CD8-positive, alpha-beta T cell (primary cell): ENCODE measurements at regions of chr20 and their contacts with region 1.

Region 1: DNA sequence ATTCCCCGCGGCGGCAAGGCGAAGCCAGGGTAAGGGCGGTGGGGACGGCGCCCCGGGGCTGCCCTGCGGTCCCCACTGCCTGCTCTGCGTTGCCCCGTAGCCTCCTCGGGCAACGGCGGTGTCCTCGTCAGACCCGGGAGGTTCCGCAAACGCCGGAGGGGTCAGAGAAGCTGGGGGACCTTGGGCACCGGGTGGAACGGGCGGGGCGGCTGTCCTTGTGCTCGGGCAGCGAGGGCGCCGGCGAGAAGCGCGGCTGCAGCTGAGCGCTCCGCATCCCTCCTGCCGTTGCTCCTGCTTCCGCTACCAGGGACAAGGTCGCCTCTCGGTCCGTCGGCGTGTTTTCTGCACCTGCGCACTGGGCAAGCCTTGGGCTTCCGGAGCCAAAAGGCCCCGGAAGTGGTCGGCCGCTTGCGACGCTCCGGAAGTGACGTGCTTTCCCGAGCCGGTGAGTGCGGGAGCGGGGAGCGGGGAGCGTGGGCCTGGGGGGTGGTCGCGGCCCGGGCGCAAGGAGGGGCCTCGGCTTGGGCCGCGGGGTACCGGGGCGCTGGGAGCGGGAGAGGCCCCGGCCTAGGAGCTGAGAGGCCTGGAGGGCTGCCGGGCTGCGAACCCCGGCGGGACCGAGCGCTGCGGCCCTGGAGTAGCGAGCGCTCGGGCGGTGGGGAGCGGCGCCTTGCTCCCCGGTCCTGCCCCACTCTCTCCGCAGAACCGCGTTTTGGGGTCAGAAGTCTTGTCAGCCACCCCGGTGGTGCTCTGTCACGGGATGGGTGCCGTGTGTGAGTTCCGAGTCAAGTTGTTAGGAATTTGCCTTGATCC is at the start of gene MTG2:
- DNase-seq: peak; percentile 85 to 98 (median 95)
- ATAC-seq: peak; percentile 92
- H3K4me3 ChIP-seq: peak within 1 kb of the TSS; percentile 82 to 89
- H3K4me3 Mint-ChIP-seq: peak within 1 kb of the TSS; percentile 95
- H3K27ac ChIP-seq: peak within 1 kb of the TSS; percentile 89 to 93
- H3K27ac Mint-ChIP-seq: peak within 1 kb of the TSS; percentile 98
- H3K4me1 ChIP-seq: peaks cover 17% of the 10 kb centered on the region
- H3K4me1 Mint-ChIP-seq: peaks cover 43% of the 10 kb centered on the region
- H3K27me3 ChIP-seq: no peaks in the 10 kb centered on the region
- H3K27me3 Mint-ChIP-seq: no peaks in the 10 kb centered on the region
- CTCF ChIP-seq: no peak
- total RNA-seq, gene MTG2: 7.7 to 8.8 TPM

Region 2: GRCh38 chr20:62065669-62066338 is 117.0 kb before region 1 on chr20 and contains the start of gene TAF4:
- CTCF ChIA-PET with region 1: no interaction called
- POLR2A ChIA-PET with region 1: no interaction called
- intact Hi-C with region 1: loop called (anchors 1 to 2 kb)
- DNase-seq: peak; percentile 69 to 92 (median 79)
- ATAC-seq: peak; percentile 77
- H3K4me3 ChIP-seq: peak within 1 kb of the TSS; percentile 54 to 70
- H3K4me3 Mint-ChIP-seq: peak within 1 kb of the TSS; percentile 90
- H3K27ac ChIP-seq: peak within 1 kb of the TSS; percentile 47 to 74
- H3K27ac Mint-ChIP-seq: peak within 1 kb of the TSS; percentile 95
- H3K4me1 ChIP-seq: peaks cover 42% of the 10 kb centered on the region
- H3K4me1 Mint-ChIP-seq: peaks cover 52% of the 10 kb centered on the region
- H3K27me3 ChIP-seq: no peaks in the 10 kb centered on the region
- H3K27me3 Mint-ChIP-seq: no peaks in the 10 kb centered on the region
- CTCF ChIP-seq: no peak
- total RNA-seq, gene TAF4: 9.8 to 14.1 TPM

Region 3: DNA sequence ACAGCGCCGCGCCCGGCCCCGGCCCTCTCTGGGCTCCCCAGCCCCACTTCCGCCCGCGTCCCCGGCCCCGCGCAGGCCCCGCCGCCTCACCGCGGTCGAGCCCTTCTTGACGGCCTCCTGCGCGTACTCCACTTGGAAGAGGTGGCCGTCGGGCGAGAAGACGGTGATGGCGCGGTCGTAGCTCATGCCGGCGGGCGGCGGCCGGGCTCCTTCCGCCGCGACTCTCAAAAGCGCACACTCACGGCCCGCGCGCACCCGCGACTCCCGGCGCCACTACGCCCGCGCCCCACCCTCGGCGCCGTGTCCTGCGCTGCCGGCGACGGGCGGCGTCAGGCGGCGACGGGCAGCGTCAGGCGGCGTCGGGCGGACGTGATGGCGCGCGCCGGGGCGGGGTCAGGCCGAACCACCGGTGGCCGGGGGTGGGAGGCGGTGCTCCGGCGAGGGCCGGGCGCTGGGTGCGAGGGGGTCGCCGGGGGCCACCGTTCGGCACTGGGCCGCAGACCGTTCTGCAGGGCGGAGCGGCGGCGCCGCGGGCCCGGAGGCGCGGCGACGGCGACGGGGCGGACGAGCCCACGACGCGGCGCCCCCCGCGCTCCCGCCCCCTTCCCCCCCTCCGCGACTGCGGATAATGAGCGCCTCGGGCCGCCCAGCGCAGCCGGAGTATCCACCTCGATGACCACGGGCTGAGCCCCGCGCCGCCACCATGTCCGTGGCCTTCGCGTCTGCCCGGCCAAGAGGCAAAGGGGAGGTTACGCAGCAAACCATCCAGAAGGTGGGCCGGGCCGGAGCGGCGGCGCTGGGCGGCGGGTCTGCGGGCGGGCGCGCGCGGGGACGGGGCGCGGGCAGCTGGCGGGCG is 39.5 kb before region 1 on chr20 and contains the starts of genes PSMA7 and SS18L1:
- CTCF ChIA-PET with region 1: no interaction called
- POLR2A ChIA-PET with region 1: no interaction called
- intact Hi-C with region 1: loop called (anchors 1 kb)
- DNase-seq: peak; percentile 65 to 95 (median 85)
- ATAC-seq: peak; percentile 83
- H3K4me3 ChIP-seq: peak within 1 kb of the TSS; percentile 59 to 60
- H3K4me3 Mint-ChIP-seq: peak within 1 kb of the TSS; percentile 92
- H3K27ac ChIP-seq: peak within 1 kb of the TSS; percentile 58 to 83
- H3K27ac Mint-ChIP-seq: peak within 1 kb of the TSS; percentile 93
- H3K4me1 ChIP-seq: peaks cover 37% of the 10 kb centered on the region
- H3K4me1 Mint-ChIP-seq: peaks cover 50% of the 10 kb centered on the region
- H3K27me3 ChIP-seq: no peaks in the 10 kb centered on the region
- H3K27me3 Mint-ChIP-seq: no peaks in the 10 kb centered on the region
- CTCF ChIP-seq: no peak
- total RNA-seq, gene PSMA7: 170 to 179 TPM
- total RNA-seq, gene SS18L1: 12.6 to 12.9 TPM

Region 4: DNA sequence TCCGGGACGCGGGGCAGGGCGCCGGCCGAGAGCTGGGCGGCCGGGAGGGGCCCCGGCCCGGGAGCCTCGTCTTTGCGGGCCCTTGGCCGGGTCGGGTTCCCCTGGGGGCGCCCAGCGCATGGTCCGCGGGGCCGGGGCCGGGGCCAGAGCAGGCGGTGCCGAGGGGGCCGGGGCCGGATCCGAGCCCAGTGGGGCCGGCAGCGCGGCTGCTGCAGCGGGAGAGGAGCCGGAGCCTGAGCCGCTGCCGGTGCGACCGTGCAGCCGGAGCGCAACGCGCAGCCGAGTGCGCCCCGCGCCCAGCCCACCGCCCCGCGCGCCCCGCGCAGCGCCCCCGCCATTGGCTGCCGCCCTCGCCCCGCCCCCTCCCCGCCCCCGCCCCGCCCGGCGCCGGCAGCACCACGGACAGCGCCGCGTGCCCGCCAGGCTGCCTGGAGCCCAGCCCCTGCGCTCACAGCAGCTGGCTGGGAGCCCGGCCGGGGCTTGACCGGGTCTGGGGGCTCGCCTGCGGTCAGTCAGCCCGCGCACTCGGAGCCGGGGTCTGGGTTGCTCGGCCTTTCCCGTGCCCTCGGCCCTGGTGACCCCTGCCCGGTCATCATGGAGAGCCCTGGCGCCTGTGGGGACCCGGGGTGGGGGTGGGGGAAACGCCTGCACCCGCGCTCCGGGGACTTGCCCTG is 37.3 kb after region 1 on chr20 and contains the start of gene HRH3:
- CTCF ChIA-PET with region 1: no interaction called
- POLR2A ChIA-PET with region 1: no interaction called
- intact Hi-C with region 1: no loop called
- DNase-seq: peak in 8 of 9 experiments; percentile 8 to 61 (median 40)
- ATAC-seq: peak; percentile 91
- H3K4me3 ChIP-seq: no peak within 1 kb of the TSS
- H3K4me3 Mint-ChIP-seq: peak within 1 kb of the TSS; percentile 50
- H3K27ac ChIP-seq: no peak within 1 kb of the TSS
- H3K27ac Mint-ChIP-seq: no peak within 1 kb of the TSS
- H3K4me1 ChIP-seq: peaks cover 8% of the 10 kb centered on the region
- H3K4me1 Mint-ChIP-seq: peaks cover 2% of the 10 kb centered on the region
- H3K27me3 ChIP-seq: peaks cover 6 to 24% of the 10 kb centered on the region in 2 experiments
- H3K27me3 Mint-ChIP-seq: peaks cover 41% of the 10 kb centered on the region
- CTCF ChIP-seq: no peak
- total RNA-seq, gene HRH3: not detected

Region 5: DNA sequence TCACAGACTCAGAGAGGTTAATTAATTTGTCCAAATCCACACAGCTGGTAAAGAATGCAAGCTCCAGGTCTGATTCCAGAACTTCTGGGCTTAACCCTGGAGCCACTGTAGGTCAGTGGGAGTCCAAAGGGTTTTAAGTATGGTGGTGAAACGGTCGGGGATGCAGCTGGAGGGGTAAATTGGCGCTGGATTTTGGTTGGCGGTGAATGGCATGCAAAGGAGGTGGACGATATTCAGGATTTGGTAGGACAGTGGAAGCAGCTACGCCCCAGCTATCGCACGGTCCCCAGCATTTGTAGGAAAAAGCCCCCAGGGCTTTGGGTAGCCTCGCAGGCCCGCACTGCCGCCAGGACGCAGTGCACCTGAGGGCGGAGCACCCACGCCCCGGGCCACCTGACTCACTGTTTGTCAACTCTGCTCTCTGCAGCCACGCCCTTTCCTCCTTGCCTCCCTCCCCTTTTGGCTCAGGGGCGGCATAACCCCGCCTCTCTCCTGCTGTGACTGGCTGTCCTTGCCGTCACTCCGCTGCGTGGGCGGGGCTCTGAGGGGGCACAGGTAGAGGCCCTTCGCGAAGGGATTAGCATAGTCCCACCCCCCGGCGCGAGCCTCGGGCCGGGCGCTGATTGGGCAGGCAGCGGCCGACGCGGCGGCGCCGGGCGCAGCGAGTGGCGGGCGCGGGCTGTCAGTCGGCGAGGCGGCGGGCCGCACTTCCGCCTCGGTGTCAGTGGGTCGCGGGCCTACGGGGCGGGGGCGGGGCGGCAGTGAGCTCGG is 55.2 kb after region 1 on chr20 and contains the start of gene OSBPL2:
- CTCF ChIA-PET with region 1: no interaction called
- POLR2A ChIA-PET with region 1: no interaction called
- intact Hi-C with region 1: loop called (anchors 1 kb)
- DNase-seq: peak; percentile 100
- ATAC-seq: peak; percentile 98
- H3K4me3 ChIP-seq: peak within 1 kb of the TSS; percentile 54 to 58
- H3K4me3 Mint-ChIP-seq: peak within 1 kb of the TSS; percentile 84
- H3K27ac ChIP-seq: peak within 1 kb of the TSS; percentile 65 to 70
- H3K27ac Mint-ChIP-seq: peak within 1 kb of the TSS; percentile 95
- H3K4me1 ChIP-seq: peaks cover 24% of the 10 kb centered on the region
- H3K4me1 Mint-ChIP-seq: peaks cover 41% of the 10 kb centered on the region
- H3K27me3 ChIP-seq: no peaks in the 10 kb centered on the region
- H3K27me3 Mint-ChIP-seq: peaks cover 9% of the 10 kb centered on the region
- CTCF ChIP-seq: no peak
- total RNA-seq, gene OSBPL2: 63.6 to 64.2 TPM

Region 6: DNA sequence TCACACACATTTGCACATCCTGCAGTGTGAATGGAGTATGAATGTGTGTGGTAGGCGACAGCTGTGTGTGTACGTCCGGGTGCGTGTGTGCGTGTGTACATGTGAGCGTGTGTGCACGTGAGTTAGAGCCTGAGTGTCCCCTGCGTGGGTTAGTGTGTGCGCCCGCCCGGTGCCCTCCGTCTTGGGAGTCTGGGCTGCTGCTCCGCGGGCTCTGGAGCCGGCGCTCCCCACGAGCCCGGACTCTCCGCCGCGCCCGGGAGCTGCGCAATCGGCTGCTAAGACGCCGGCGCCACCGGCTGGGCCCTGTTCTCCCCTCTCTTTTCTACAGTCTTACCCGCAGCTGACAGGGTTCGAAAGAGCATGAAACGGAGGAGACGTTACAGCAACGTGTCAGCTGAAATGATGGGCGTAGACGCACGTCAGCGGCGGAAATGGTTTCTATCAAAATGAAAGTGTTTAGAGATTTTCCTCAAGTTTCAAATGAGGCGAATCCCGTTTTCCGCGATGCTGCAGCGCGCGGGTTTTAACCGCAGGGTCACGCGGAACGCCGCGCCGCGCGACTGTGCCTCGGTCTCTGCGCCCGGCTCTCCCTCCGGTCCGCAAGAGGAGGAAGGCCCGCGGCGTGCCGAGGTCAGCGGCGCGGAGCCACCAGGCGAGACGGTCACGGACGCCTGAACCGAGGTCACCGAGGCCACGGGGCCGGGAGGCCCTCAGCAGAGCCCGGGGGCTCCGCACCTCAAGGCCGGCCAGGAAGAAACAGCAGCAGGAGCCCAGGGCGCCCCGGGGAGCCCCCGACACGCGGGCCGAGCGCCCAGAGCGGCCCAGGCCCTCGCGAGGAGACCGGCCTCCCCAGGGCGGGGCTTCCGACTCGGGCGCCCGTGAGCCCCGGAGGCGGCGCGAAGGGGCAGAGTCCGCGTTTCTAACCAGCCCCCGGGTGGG is 919.2 kb after region 1 on chr20:
- CTCF ChIA-PET with region 1: no interaction called
- POLR2A ChIA-PET with region 1: no interaction called
- intact Hi-C with region 1: loop called in 1 of 2 experiments (anchors 5 kb)
- DNase-seq: peak; percentile 30 to 84 (median 59)
- ATAC-seq: peak; percentile 68
- H3K4me3 ChIP-seq: peak overlapping the region; percentile 74 to 98
- H3K4me3 Mint-ChIP-seq: peak overlapping the region; percentile 87
- H3K27ac ChIP-seq: peak overlapping the region; percentile 89 to 98
- H3K27ac Mint-ChIP-seq: peak overlapping the region; percentile 91
- H3K4me1 ChIP-seq: no peaks in the 10 kb centered on the region
- H3K4me1 Mint-ChIP-seq: peaks cover 11% of the 10 kb centered on the region
- H3K27me3 ChIP-seq: no peaks in the 10 kb centered on the region
- H3K27me3 Mint-ChIP-seq: no peaks in the 10 kb centered on the region
- CTCF ChIP-seq: no peak